ENCODE measurements at regions of chr5 and their contacts with region 1.

Region 1: GRCh38 chr5:174935854-174936474 is 211.6 kb downstream of the MSX2 start:
- DNase-seq: no peak
- ATAC-seq: peak; percentile 80
- H3K4me3 ChIP-seq: no peak overlapping the region
- H3K27ac ChIP-seq: no peak overlapping the region
- H3K4me1 ChIP-seq: no peaks in the 10 kb centered on the region
- H3K27me3 ChIP-seq: no peaks in the 10 kb centered on the region; a peak in 1 of 4 replicates
- CTCF ChIP-seq: peak; percentile 84 to 97 (median 88)
- EP300 ChIP-seq: no peak
- POLR2A ChIP-seq: no peak
- RAD21 ChIP-seq: peak; percentile 70

Region 2: DNA sequence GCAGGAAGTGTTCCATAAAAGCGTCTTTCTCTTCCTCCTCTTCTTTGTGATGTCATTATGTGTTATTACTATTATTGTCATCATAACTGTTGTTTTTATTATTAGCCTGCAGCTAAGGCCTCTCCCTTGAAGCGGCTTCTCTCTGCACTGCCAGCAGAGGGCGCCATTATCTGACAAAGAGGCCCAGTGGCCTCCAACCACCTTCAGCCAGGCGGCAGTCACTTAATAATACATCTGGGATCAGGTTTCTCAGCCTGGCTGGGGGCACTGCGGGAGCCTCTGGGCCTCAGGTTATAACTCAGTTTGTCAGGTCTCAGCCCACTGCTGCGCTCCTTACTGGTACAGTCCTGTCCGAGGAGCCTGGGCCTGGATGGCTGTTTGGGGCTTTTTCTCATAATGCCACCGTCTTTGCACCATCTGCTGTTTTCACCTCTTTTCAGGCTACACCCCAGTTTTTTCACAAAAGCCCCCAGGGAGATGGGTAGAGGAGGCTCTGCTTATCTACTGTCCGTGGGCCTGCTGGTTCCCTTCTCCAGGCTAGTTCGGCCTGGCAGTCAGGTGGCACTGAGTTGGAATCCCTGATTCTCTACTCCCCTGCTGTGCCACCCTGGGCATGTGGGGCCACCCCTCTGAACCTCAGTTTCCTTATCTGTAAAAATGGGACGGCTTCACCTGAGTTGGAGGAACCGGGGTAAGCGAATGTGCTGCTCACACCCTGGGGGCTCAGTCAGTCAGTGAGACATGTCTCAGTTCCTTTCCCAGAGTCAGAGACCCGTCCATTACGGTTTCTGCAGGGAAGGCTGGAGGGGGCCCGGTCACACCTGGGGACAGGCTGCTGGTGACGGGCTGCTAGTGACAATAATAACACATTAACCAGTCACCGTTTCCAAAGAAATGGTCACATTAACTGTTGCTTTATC is 608.4 kb before region 1 on chr5:
- CTCF ChIA-PET with region 1: no interaction called
- POLR2A ChIA-PET with region 1: no interaction called
- RAD21 ChIA-PET with region 1: no interaction called
- SMC1A ChIA-PET with region 1: no interaction called
- in situ Hi-C with region 1: no loop called
- intact Hi-C with region 1: loop called (anchors 5 kb)
- DNase-seq: no peak
- ATAC-seq: peak; percentile 89
- H3K4me3 ChIP-seq: no peak overlapping the region
- H3K27ac ChIP-seq: no peak overlapping the region
- H3K4me1 ChIP-seq: no peaks in the 10 kb centered on the region
- H3K27me3 ChIP-seq: no peaks in the 10 kb centered on the region; a peak in 1 of 4 replicates
- CTCF ChIP-seq: peak; percentile 74 to 84 (median 81)
- EP300 ChIP-seq: no peak
- POLR2A ChIP-seq: no peak
- RAD21 ChIP-seq: peak; percentile 60

Region 3: DNA sequence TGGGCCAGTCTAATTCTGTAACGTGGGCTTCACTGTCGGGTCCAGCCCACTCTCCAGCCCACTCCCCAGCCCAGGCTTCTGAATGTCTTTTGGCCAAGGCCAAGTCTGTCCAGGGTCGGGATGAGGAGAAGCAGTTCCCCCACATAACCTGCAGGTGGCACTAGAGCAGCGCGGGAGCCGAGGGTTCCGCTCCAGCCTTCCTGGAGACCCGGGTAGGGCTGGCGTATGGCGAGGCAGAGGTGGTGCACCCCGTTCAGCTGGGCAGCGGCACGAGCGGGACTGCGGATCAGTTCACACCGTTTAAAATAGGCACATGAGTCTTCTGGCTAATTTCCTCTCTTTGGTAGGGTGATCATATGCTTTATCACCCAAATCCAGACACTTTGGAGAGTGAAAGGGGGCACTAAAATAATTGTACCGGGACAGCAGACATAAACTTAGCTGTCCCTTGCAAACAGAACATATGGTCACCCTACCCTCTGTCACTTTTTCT is 25.7 kb before region 1 on chr5:
- CTCF ChIA-PET with region 1: interaction called, 3 read pairs
- POLR2A ChIA-PET with region 1: no interaction called
- RAD21 ChIA-PET with region 1: no interaction called
- SMC1A ChIA-PET with region 1: no interaction called
- in situ Hi-C with region 1: no loop called
- intact Hi-C with region 1: loop called (anchors 2 kb)
- DNase-seq: no peak
- ATAC-seq: peak; percentile 98
- H3K4me3 ChIP-seq: no peak overlapping the region
- H3K27ac ChIP-seq: no peak overlapping the region
- H3K4me1 ChIP-seq: no peaks in the 10 kb centered on the region
- H3K27me3 ChIP-seq: no peaks in the 10 kb centered on the region
- CTCF ChIP-seq: peak; percentile 78 to 96 (median 81)
- EP300 ChIP-seq: no peak
- POLR2A ChIP-seq: no peak
- RAD21 ChIP-seq: peak; percentile 63